Gastrocnemius medialis (tissue), 4 donors: ENCODE measurements at regions of chr17 and their contacts with region 1.

Region 1: DNA sequence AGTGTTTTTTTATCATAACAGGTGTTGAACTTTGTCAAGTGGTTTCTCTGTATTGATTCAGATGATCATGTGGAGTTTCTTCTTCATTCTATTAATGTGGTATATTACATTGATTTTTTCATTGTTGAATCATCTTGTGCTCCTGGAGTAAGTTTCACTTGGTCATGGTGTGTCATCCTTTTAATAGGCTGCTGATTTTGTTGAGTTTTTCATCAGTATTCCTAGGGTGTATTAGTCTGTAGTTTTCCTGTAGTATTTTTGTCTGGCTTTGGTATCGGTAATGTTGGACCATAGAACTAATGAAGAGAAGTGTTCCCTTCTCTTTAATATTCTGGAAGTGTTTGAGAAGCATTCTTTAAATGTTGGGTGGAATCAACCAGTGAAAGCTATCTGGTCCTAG is 99.0 kb downstream of the OMG start:
- DNase-seq: no peak
- ATAC-seq: no peak
- H3K4me3 ChIP-seq: no peak overlapping the region
- H3K27ac ChIP-seq: no peak overlapping the region
- H3K4me1 ChIP-seq: no peaks in the 10 kb centered on the region
- H3K27me3 ChIP-seq: no peaks in the 10 kb centered on the region
- CTCF ChIP-seq: no peak
- POLR2A ChIP-seq: no peak

Region 2: GRCh38 chr17:31294820-31295488 is 97.0 kb after region 1 on chr17:
- in situ Hi-C with region 1: loop called in 1 of 4 experiments (anchors 25 kb)
- intact Hi-C with region 1: no loop called
- DNase-seq: no peak
- ATAC-seq: no peak
- H3K4me3 ChIP-seq: no peak overlapping the region
- H3K27ac ChIP-seq: no peak overlapping the region
- H3K4me1 ChIP-seq: no peaks in the 10 kb centered on the region
- H3K27me3 ChIP-seq: no peaks in the 10 kb centered on the region
- CTCF ChIP-seq: no peak
- POLR2A ChIP-seq: no peak